T-cell (primary cell): ENCODE measurements at regions of chr4 and their contacts with region 1.

Region 1: GRCh38 chr4:11424000-11424399 is 4.7 kb downstream of the HS3ST1 start:
- DNase-seq: peak in 7 of 35 experiments; percentile 8 to 49 (median 17)
- ATAC-seq: no peak
- H3K4me3 ChIP-seq: no peak overlapping the region
- H3K4me3 Mint-ChIP-seq: no peak overlapping the region
- H3K27ac ChIP-seq: no peak overlapping the region
- H3K27ac Mint-ChIP-seq: no peak overlapping the region
- H3K4me1 ChIP-seq: peaks cover 0 to 17% of the 10 kb centered on the region in 2 experiments
- H3K4me1 Mint-ChIP-seq: peaks cover 16 to 18% (median 17%) of the 10 kb centered on the region in 3 donors
- H3K27me3 ChIP-seq: peaks cover 4 to 25% of the 10 kb centered on the region in 2 experiments
- H3K27me3 Mint-ChIP-seq: peaks cover 20 to 21% of the 10 kb centered on the region in 2 donors

Region 2: GRCh38 chr4:11326021-11326420 is 98.0 kb before region 1 on chr4:
- CTCF ChIA-PET with region 1: no interaction called
- POLR2A ChIA-PET with region 1: no interaction called
- DNase-seq: no peak
- ATAC-seq: no peak
- H3K4me3 ChIP-seq: no peak overlapping the region
- H3K4me3 Mint-ChIP-seq: no peak overlapping the region
- H3K27ac ChIP-seq: no peak overlapping the region
- H3K27ac Mint-ChIP-seq: no peak overlapping the region
- H3K4me1 ChIP-seq: no peaks in the 10 kb centered on the region
- H3K4me1 Mint-ChIP-seq: no peaks in the 10 kb centered on the region
- H3K27me3 ChIP-seq: no peaks in the 10 kb centered on the region
- H3K27me3 Mint-ChIP-seq: peaks cover 0 to 3% of the 10 kb centered on the region in 2 donors

Region 3: DNA sequence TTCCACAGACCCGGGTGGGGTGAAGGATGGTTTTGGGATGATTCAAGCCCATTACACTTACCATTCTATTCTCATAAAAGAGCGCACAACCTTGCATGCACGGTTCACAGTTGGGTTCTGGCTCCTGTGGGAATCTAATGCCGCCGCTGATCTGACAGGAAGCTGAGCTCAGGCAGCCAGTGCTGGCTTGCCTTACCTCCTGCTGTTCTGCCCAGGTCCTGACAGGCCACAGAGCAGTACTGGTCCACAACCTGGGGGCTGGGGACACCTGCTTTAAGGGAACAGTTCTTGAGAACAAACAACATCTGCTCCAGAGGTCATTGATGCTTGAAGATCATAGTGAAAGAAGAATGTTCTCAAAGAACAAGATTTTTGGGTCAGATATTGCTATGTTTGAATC is 12.7 kb after region 1 on chr4:
- CTCF ChIA-PET with region 1: interaction called in 1 of 2 experiments, 17 read pairs
- POLR2A ChIA-PET with region 1: no interaction called
- DNase-seq: no peak
- ATAC-seq: no peak
- H3K4me3 ChIP-seq: no peak overlapping the region
- H3K4me3 Mint-ChIP-seq: no peak overlapping the region
- H3K27ac ChIP-seq: no peak overlapping the region
- H3K27ac Mint-ChIP-seq: no peak overlapping the region
- H3K4me1 ChIP-seq: peaks cover 0 to 2% of the 10 kb centered on the region in 2 experiments
- H3K4me1 Mint-ChIP-seq: peaks cover 0 to 2% (median 0%) of the 10 kb centered on the region in 3 donors
- H3K27me3 ChIP-seq: no peaks in the 10 kb centered on the region
- H3K27me3 Mint-ChIP-seq: peaks cover 0 to 8% of the 10 kb centered on the region in 2 donors

Region 4: GRCh38 chr4:11635359-11636072 is 211.5 kb after region 1 on chr4:
- CTCF ChIA-PET with region 1: no interaction called
- POLR2A ChIA-PET with region 1: no interaction called
- DNase-seq: no peak
- ATAC-seq: no peak
- H3K4me3 ChIP-seq: no peak overlapping the region
- H3K4me3 Mint-ChIP-seq: no peak overlapping the region
- H3K27ac ChIP-seq: no peak overlapping the region
- H3K27ac Mint-ChIP-seq: no peak overlapping the region
- H3K4me1 ChIP-seq: no peaks in the 10 kb centered on the region
- H3K4me1 Mint-ChIP-seq: no peaks in the 10 kb centered on the region
- H3K27me3 ChIP-seq: no peaks in the 10 kb centered on the region
- H3K27me3 Mint-ChIP-seq: no peaks in the 10 kb centered on the region